ENCODE measurements at regions of chr7 and their contacts with region 1.

Region 1: GRCh38 chr7:112449902-112450806 is at the start of gene IFRD1:
- DNase-seq: peak; percentile 88
- H3K4me3 ChIP-seq: peak within 1 kb of the TSS; percentile 98
- CTCF ChIP-seq: no peak

Region 2: DNA sequence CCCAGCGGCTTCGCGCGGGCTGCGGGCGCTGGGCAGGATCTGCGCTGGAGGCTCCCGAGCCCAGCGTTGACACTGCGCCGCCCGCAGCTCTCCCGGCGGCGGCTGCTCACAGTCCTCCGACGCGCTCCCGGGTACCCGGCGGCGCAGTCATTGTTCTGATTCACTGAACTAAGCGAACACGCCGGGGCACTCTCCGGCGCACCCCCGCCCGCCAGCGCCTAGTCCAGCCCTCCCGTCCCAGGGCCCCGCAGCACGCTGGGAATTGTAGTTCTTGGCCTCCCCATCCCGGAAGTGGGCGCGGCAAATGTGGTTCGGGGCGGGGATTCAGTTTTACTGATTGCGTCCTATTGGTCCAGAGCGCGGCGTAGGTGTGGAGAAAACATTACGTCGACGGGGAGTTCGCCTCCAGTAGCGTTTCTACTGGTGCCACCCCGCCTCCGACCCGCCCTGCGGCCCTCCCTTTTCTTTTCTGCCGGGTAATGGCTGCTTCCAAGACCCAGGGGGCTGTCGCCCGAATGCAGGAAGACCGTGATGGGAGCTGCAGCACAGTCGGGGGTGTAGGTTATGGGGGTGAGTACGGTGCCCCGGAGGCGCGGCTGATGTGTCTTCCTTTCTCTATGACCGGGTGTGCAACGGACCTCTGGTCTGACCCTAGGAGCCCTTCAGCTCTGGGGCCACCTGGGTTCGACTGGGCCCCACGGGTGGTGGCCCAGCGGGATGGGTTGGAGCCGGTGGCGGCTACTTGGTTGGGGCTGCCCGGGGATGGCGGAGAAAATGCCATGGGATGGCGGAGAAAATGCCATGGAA is 243.7 kb before region 1 on chr7 and contains the starts of genes DOCK4 and ZNF277:
- CTCF ChIA-PET with region 1: no interaction called
- POLR2A ChIA-PET with region 1: interaction called, 26 read pairs
- DNase-seq: peak; percentile 92
- H3K4me3 ChIP-seq: peak within 1 kb of the TSS; percentile 95
- CTCF ChIP-seq: no peak

Region 3: DNA sequence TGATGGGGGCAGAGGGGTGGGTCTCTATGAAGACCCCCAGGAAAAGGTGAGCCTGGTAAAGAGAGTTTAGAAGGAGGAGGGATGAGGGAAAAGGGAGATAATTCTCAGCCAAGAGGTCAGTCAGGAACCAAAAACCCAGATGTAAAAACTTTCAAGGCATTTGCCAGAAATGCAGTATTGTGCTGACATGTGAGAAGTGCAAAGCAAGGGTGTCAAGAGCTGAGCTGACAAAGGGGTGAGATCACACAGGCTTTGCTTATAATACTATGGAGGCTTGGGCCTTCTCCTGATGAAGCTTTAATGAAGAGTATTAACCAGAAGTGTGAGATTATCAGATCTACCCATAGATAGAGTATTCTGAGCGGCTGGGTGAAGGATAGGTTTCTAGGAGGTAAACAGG is 22.2 kb before region 1 on chr7:
- CTCF ChIA-PET with region 1: interaction called, 3 read pairs
- POLR2A ChIA-PET with region 1: interaction called, 11 read pairs
- DNase-seq: no peak
- H3K4me3 ChIP-seq: no peak overlapping the region
- CTCF ChIP-seq: no peak

Region 4: DNA sequence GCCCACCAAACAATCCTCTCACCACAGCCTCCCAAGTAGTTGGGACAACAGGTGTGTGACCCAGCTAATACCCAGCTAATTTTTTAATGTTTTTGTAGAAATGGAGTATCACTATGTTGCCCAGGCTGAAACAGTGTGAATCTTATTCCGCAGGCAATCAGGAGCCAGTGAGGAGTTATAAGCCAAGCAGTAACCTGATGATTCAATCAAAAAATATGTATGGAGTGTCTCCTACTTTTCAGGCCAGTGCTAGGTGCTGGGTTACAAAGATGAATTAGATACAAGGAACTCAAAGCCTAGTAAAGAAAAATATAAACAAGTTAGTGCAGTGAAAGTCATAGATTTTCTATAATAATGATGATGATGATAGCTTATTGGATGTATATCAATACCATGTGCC is 13.1 kb before region 1 on chr7:
- CTCF ChIA-PET with region 1: interaction called, 5 read pairs
- POLR2A ChIA-PET with region 1: interaction called, 16 read pairs
- DNase-seq: no peak
- H3K4me3 ChIP-seq: no peak overlapping the region
- CTCF ChIP-seq: no peak

Region 5: DNA sequence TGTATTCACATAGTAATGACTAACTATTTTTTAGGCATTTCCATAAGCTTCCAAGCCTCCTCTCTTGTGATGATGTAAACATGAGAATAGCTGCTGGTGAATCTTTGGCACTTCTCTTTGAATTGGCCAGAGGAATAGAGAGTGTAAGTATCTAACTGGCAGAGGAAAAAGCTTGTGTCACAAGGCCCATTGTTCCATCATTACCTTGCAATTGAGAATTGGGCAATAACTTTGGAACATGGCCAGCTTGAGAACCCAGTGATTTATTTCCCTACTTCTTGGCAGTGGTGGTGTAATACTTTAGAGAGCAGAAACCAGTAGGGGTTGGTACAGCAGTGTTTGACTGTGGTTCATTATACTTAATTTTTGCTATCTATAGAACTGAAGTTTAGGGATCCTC is 12.1 kb after region 1 on chr7:
- CTCF ChIA-PET with region 1: interaction called, 6 read pairs
- POLR2A ChIA-PET with region 1: interaction called, 27 read pairs
- DNase-seq: no peak
- H3K4me3 ChIP-seq: no peak overlapping the region
- CTCF ChIP-seq: no peak

Measured in AG04449 (cell line).